AG04450 (cell line): ENCODE measurements at regions of chr4 and their contacts with region 1.

Region 1: DNA sequence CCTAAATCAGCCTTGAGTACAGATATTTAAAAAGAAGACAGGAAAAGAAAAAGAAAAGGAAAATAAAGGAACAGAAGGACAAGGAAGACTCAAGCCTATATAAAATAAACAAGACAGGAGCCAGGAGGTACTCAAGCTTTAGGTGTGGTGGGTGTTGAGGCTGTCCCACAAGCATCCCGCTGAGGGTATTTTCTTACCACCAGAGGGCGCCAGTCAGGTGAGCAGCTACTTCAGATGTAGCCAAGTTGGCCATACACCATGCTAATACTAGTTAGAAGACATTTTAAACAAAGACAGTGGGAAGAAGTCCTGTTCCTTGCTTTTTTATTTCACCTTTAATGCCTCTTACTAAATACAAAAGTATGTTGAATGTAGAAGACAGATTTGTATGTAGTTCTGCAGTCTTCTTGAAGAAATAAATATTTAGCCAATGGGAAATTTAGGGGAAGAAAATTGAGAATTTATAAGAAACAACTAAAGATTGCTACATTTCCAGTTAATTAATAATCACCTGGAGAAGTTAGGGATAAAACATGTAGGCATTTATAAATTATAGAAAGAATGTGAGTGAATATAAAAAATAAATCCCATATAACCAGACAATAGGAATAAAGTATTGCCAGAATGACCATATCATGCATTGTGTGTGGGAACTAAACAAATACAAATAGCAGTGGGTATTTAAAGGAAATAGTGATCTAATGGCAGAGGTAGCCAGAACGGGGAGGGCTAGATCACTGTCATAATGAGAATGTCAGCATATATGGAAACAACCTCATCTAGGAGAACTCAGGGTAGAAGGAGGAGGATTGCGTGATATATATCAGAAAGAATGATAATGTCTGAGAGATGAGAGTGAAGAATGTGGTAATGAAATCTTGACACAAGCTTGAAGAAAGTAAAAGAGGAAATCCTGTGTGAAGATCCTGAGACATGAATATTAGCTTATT is 71.0 kb downstream of the MTHFD2L start:
- DNase-seq: peak; percentile 30
- H3K4me3 ChIP-seq: no peak overlapping the region
- H3K27ac ChIP-seq: no peak overlapping the region
- H3K27me3 ChIP-seq: no peaks in the 10 kb centered on the region
- CTCF ChIP-seq: peak; percentile 87

Region 2: DNA sequence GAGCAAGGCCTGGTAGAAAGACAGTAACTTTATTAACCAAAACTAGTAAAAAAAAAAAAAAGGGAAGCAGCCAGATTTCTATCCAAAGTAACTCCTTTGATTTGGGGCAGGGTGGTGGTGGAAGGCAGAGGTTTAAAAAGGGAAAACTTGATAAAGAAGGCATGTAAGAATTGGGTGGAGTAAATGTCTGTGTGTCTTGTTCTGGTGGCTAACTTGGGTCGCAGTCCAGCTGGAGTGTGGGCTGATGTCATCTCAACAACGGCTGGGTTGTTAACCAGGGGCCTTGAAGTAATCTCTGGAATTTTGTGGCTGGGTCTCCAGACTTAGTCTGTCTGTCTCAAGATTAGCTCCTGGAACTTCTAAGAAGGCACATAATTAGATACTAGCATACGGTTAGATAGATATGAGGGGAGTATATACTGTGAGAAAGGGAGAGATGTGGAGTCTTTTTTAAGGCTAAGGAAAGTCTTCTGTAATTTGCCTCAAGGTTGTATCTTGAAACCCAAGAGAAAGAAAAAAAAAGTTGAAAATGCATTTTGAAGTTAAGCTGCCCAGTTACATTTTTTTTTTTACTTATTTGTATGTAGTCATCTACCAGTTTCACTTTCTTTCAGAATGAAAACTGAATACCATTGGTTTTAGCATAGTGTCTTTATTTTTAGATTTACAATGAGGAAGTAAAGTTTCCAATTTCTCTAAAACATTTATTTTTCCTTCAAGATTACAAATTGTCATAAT is 22.7 kb before region 1 on chr4:
- CTCF ChIA-PET with region 1: interaction called, 10 read pairs
- POLR2A ChIA-PET with region 1: no interaction called
- DNase-seq: no peak
- H3K4me3 ChIP-seq: no peak overlapping the region
- H3K27ac ChIP-seq: no peak overlapping the region
- H3K27me3 ChIP-seq: no peaks in the 10 kb centered on the region
- CTCF ChIP-seq: no peak

Region 3: DNA sequence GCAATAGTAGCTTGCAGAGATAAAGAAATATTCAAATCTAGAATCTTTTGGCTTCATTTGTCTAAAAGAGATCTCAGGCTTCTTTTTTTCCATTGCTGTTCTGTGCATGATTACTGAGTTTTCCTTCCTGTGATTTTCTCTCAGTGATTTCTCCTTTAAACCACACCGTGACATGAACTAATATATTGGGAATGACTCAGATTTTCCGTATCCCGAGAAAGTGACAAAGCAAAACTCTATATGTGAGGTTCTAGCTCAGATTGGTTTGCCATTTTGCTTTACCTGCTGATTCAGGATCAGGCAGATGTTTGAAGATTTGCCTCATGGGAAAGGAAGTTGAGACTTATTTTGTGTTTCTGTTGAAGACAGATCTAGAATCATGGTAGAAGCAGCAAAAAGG is 11.6 kb before region 1 on chr4:
- CTCF ChIA-PET with region 1: interaction called, 18 read pairs
- POLR2A ChIA-PET with region 1: no interaction called
- DNase-seq: no peak
- H3K4me3 ChIP-seq: no peak overlapping the region
- H3K27ac ChIP-seq: no peak overlapping the region
- H3K27me3 ChIP-seq: no peaks in the 10 kb centered on the region
- CTCF ChIP-seq: no peak

Region 4: DNA sequence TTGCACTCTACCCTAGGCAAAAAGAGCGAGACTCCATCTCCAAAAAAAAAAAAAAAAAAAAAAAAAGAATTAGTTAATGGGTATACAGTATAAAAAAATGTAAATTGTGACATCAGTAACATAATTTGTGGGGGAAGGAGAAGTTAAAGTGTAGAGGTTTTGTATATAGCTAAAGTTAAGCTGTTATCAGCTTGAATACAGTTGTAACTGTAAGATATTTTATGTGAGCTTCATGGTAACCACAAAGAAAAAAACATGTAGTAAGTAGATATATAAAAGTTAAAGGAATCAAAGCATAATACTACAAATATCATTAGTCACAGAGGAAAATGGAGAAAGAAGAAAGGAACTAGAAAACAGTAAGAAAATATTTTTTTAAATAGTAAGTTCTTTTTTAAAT is 26.1 kb after region 1 on chr4:
- CTCF ChIA-PET with region 1: interaction called, 8 read pairs
- POLR2A ChIA-PET with region 1: interaction called, 11 read pairs
- DNase-seq: no peak
- H3K4me3 ChIP-seq: no peak overlapping the region
- H3K27ac ChIP-seq: no peak overlapping the region
- H3K27me3 ChIP-seq: no peaks in the 10 kb centered on the region
- CTCF ChIP-seq: no peak

Region 5: GRCh38 chr4:74311696-74312313 is 82.8 kb after region 1 on chr4:
- CTCF ChIA-PET with region 1: interaction called, 19 read pairs
- POLR2A ChIA-PET with region 1: no interaction called
- DNase-seq: peak; percentile 13
- H3K4me3 ChIP-seq: no peak overlapping the region
- H3K27ac ChIP-seq: no peak overlapping the region
- H3K27me3 ChIP-seq: no peaks in the 10 kb centered on the region
- CTCF ChIP-seq: peak; percentile 72

Region 6: DNA sequence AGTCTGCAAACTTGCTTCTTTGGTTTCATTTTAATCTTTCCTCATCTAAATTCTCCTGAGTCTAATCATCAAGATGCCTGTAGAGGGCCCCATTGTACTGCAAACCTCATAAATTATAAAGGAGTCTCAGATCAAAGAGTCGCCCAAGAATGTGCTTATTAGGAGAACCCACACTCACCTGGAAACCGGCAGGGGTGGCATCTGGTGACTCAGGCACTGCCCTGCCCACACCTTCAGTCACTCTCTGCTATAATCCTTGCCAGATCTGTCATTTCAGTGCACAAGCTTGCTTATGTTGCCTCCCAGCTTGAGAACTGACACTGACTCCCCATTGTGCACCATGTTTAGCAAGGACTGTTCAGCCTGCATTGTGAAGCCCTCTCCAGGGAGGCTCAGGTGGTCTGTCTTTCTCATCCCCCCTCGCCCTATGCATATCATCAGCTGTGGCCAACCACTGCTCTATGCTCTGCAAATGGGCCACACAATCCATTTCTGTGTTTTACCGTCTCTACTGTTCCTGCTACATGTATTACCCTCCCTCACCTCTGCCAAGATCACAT is 91.7 kb after region 1 on chr4:
- CTCF ChIA-PET with region 1: interaction called, 19 read pairs
- POLR2A ChIA-PET with region 1: no interaction called
- DNase-seq: peak; percentile 46
- H3K4me3 ChIP-seq: no peak overlapping the region
- H3K27ac ChIP-seq: no peak overlapping the region
- H3K27me3 ChIP-seq: no peaks in the 10 kb centered on the region
- CTCF ChIP-seq: peak; percentile 69

Region 7: GRCh38 chr4:74397748-74398426 is 168.9 kb after region 1 on chr4:
- CTCF ChIA-PET with region 1: no interaction called
- POLR2A ChIA-PET with region 1: no interaction called
- DNase-seq: no peak
- H3K4me3 ChIP-seq: no peak overlapping the region
- H3K27ac ChIP-seq: no peak overlapping the region
- H3K27me3 ChIP-seq: no peaks in the 10 kb centered on the region
- CTCF ChIP-seq: no peak